Activated T-helper 1 cell treated with anti-CD3 and anti-CD28 coated beads, Interleukin-12 subunit alpha, Interleukin-12 subunit beta, Interleukin-2, Interleukin-4 antibody, amounts not matched to agents 30 ng/mL and 10 ng/mL and 1 ng/mL, durations not matched to agents 14 hours and 24 hours and 36 hours (primary cell): ENCODE measurements at regions of chr1 and their contacts with region 1.

Region 1: DNA sequence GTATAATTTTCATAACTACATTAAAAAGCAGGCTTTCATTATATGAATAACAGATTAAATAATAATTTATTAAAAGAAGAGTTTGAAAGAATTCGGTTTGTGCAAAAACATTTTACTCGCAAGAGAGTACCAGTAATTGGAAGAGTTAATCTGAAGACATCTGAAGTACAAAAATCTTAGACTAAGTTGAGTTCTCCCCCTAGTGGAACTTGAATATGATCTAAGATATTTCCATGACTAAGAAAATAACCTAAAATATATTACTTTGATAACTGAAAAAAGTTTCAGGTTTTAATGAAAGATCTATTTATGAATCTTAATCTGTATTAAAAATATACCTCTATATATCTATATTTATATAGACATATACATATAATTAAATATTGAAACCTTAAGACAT is 112.5 kb upstream of the GFI1 start:
- DNase-seq: no peak
- H3K4me3 Mint-ChIP-seq: no peak overlapping the region
- H3K27ac Mint-ChIP-seq: no peak overlapping the region
- H3K4me1 Mint-ChIP-seq: peaks cover 27% of the 10 kb centered on the region
- H3K27me3 Mint-ChIP-seq: no peaks in the 10 kb centered on the region

Region 2: DNA sequence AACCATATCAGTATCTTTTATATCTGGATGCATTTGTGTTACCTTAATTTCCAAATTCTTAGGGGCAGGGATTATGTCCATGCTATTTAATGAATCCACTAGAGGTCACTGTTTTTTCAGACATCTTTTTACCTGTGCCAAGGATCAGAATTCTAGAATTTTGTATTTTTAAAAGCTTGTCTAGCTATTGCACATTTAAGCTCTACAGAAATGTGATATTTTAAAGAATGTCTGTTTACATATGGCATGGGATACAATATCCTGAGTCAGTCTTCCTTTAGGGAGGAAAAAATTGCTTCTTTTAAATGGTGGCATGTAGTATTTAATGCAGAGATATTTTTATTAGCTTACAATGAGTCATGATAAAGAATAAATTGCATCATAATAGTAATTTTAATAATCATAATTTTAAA is 289.0 kb before region 1 on chr1:
- intact Hi-C with region 1: loop called (anchors 1 kb)
- DNase-seq: no peak
- H3K4me3 Mint-ChIP-seq: no peak overlapping the region
- H3K27ac Mint-ChIP-seq: no peak overlapping the region
- H3K4me1 Mint-ChIP-seq: peaks cover 42% of the 10 kb centered on the region
- H3K27me3 Mint-ChIP-seq: no peaks in the 10 kb centered on the region

Region 3: DNA sequence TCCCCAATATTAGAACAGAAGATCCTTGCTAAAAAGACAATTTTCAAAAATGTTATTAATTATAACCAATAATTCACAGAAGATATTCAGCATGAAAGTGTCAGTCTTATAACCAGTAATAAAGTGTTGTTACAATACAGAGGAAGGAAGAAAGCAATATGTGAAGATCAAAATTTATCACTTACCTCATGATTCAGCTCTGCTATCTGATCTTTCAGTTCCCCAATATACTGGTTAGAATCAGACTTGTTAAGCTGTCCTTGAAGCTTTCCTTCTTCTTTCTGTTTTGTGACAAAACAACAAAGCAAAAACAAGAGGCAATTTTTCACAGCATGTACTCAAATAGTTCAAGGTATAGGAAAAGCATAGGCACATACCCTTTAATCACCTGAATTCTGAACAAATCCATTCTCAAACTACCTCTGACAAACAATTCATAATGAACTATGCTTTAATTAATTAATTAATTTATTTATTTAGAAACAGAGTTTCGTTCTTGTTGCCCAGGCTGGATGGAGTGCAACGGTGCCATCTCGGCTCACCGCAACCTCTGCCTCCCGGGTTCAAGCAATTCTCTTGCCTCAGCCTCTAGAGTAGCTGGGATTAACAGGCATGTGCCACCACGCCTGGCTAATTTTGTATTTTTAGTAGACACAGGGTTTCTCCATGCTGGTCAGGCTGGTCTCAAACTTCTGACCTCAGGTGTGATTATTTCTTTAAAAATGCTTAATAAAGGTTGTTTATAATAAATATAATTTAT is 35.5 kb before region 1 on chr1:
- intact Hi-C with region 1: no loop called
- DNase-seq: no peak
- H3K4me3 Mint-ChIP-seq: no peak overlapping the region
- H3K27ac Mint-ChIP-seq: peak overlapping the region; percentile 12
- H3K4me1 Mint-ChIP-seq: peaks cover 41% of the 10 kb centered on the region
- H3K27me3 Mint-ChIP-seq: no peaks in the 10 kb centered on the region